ENCODE measurements at regions of chr3 and their contacts with region 1.

Region 1: DNA sequence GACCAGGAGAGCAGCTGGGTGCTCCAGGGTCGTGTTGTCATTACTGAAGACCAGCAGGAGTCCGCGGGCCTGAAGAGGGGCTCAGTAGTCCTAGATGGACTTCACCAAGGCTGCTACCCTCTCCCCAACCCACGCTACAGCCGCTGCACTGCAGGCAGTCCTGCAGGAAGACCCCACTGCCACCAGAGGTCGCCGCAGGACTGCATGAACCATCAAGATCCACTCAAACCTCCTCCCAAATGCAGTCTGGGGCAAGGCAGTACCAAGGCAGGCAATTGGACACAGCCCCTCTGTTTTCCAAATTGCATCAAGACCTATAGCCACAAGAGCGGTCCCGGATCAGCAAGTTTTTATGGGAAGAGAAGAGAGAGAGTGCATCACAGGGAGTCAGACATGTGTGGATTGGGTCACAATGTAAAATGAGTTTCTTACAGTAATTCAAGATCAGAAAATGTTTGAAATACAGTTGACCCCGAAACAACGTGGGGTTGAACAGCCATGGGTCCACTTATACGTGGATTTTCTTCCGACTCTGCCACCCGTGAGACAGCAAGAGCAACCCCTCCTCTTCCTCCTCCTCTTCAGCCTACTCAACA is 46.7 kb downstream of the DZIP1L start:
- DNase-seq: peak; percentile 75 to 89 (median 80)
- H3K4me3 ChIP-seq: no peak overlapping the region
- H3K27ac ChIP-seq: no peak overlapping the region
- H3K4me1 ChIP-seq: no peaks in the 10 kb centered on the region
- H3K27me3 ChIP-seq: no peaks in the 10 kb centered on the region
- CTCF ChIP-seq: peak; percentile 95 to 99 (median 98)
- POLR2A ChIP-seq: no peak

Region 2: DNA sequence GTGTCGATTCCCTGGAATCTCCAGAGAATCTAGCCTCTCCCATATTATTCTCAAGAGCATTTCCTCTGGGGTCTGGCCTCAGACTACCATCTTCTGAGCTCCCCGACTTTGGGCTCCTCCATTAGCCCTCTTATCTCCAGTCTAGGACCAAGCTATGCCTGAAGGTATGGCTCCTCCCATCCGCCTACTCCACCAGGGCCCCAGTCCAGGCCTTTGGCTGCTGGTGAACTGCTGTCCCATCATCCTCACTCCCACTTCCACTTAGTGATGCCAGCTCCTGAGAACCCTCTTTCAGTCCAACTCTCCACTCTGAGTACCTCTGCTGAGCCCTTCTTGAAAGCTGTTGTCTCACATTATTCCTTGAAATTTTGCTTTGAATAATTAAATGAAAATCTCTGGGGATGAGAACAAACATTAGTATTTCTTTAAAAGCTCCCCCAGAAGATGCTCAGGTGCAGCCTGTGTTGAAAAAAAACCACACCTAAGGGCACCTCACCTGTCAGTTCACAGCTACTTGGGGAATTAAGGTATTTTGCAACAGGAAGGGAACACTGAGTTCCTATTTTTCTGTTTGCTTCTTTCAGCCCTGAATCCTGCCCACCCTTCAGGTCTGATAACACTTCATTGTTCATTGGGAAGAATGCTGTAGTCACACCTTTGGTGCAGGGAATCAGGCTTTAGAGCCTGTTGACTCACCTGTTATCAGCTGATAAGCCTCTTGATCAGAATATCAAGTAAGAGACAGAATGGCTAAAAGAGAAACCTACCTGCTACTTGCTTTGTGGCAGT is 49.2 kb before region 1 on chr3:
- intact Hi-C with region 1: no loop called
- DNase-seq: no peak
- H3K4me3 ChIP-seq: no peak overlapping the region
- H3K27ac ChIP-seq: no peak overlapping the region
- H3K4me1 ChIP-seq: no peaks in the 10 kb centered on the region
- H3K27me3 ChIP-seq: no peaks in the 10 kb centered on the region
- CTCF ChIP-seq: no peak
- POLR2A ChIP-seq: no peak

Region 3: GRCh38 chr3:138118612-138119422 is 50.1 kb after region 1 on chr3:
- intact Hi-C with region 1: loop called (anchors 2 to 5 kb)
- DNase-seq: peak; percentile 67 to 95 (median 76)
- H3K4me3 ChIP-seq: no peak overlapping the region
- H3K27ac ChIP-seq: no peak overlapping the region
- H3K4me1 ChIP-seq: peaks cover 6 to 11% of the 10 kb centered on the region in 2 donors
- H3K27me3 ChIP-seq: no peaks in the 10 kb centered on the region
- CTCF ChIP-seq: peak; percentile 50 to 80 (median 78)
- POLR2A ChIP-seq: no peak

Region 4: DNA sequence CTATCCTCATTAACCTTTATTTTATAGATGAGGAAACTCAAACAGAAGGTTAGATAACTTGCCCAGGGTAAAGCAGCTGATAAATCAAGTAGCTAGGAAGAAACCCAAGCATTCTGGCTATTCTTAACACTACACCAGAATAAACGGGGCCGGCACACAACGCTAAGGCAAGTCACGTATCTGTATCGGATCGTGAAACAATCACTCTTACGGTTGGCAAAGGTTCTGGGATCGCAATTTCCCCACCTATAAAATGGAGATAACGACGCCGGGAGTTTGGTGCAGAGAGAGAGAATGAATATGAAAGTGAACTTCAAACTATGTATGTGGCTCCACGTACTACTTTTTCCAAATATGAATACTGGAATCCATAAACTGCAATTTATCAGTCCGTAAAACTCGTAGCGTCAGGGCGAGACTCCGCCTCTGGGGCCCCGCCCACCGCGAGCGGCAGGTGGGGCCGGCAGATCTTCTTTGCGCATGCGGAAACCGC is 118.2 kb after region 1 on chr3:
- intact Hi-C with region 1: no loop called
- DNase-seq: peak; percentile 89 to 95 (median 91)
- H3K4me3 ChIP-seq: peak overlapping the region in 3 of 4 donors; percentile 92 to 100 (median 93)
- H3K27ac ChIP-seq: peak overlapping the region; percentile 82 to 99 (median 95)
- H3K4me1 ChIP-seq: peaks cover 0 to 19% of the 10 kb centered on the region in 2 donors
- H3K27me3 ChIP-seq: peaks cover 10% of the 10 kb centered on the region
- CTCF ChIP-seq: no peak
- POLR2A ChIP-seq: no peak

Measured in adrenal gland (tissue), 19 donors.